CD14-positive monocyte (primary cell): ENCODE measurements at regions of chr4 and their contacts with region 1.

Region 1: DNA sequence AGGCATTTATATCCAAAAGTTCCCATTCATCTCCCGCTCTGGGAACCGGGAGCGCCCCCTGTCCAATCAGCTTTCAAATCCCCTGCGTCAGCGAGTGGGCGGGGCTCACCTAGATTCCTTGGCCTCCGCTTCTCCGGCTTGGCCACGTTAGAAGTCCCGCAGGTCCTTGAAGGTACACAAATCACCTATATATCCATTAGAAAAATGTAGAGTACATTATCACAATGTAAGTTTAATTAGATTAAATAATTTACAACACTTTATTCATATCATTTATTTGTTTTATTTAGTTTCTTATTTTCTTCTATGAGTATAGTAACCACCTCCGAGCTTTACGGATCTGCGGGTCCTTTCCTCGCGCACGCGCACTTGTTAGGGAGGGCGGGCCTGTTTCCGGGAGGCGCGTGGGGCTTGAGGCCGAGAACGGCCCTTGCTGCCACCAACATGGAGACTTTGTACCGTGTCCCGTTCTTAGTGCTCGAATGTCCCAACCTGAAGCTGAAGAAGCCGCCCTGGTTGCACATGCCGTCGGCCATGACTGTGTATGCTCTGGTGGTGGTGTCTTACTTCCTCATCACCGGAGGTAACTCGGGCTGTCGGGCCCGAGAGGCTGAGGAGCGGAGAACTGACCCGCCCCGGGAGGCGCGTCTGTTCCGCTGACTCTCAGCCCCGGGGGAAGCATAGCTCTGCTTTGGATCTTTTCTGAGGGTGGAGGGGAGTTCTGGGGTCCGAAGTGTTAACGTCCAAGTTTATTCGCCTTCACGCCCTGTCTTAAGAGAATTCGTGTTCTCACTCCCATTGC is at the start of gene OSTC:
- DNase-seq: peak; percentile 91 to 94 (median 94)
- H3K4me3 ChIP-seq: peak within 1 kb of the TSS; percentile 57 to 97 (median 84)
- H3K4me3 Mint-ChIP-seq: peak within 1 kb of the TSS; percentile 96 to 98
- H3K27ac ChIP-seq: peak within 1 kb of the TSS; percentile 84 to 94
- H3K27ac Mint-ChIP-seq: peak within 1 kb of the TSS; percentile 93 to 98 (median 98)
- H3K4me1 ChIP-seq: peaks cover 16 to 18% of the 10 kb centered on the region in 2 donors
- H3K4me1 Mint-ChIP-seq: peaks cover 26% of the 10 kb centered on the region
- H3K27me3 ChIP-seq: no peaks in the 10 kb centered on the region
- H3K27me3 Mint-ChIP-seq: no peaks in the 10 kb centered on the region
- CTCF ChIP-seq: no peak
- polyA plus RNA-seq, gene OSTC: 68.5 to 156 (median 149) TPM

Region 2: GRCh38 chr4:108135549-108136209 is 514.7 kb before region 1 on chr4:
- intact Hi-C with region 1: no loop called
- DNase-seq: no peak
- H3K4me3 ChIP-seq: no peak overlapping the region
- H3K4me3 Mint-ChIP-seq: no peak overlapping the region
- H3K27ac ChIP-seq: no peak overlapping the region
- H3K27ac Mint-ChIP-seq: no peak overlapping the region
- H3K4me1 ChIP-seq: no peaks in the 10 kb centered on the region
- H3K4me1 Mint-ChIP-seq: no peaks in the 10 kb centered on the region
- H3K27me3 ChIP-seq: no peaks in the 10 kb centered on the region
- H3K27me3 Mint-ChIP-seq: peaks cover 0 to 3% (median 0%) of the 10 kb centered on the region in 3 donors
- CTCF ChIP-seq: no peak

Region 3: DNA sequence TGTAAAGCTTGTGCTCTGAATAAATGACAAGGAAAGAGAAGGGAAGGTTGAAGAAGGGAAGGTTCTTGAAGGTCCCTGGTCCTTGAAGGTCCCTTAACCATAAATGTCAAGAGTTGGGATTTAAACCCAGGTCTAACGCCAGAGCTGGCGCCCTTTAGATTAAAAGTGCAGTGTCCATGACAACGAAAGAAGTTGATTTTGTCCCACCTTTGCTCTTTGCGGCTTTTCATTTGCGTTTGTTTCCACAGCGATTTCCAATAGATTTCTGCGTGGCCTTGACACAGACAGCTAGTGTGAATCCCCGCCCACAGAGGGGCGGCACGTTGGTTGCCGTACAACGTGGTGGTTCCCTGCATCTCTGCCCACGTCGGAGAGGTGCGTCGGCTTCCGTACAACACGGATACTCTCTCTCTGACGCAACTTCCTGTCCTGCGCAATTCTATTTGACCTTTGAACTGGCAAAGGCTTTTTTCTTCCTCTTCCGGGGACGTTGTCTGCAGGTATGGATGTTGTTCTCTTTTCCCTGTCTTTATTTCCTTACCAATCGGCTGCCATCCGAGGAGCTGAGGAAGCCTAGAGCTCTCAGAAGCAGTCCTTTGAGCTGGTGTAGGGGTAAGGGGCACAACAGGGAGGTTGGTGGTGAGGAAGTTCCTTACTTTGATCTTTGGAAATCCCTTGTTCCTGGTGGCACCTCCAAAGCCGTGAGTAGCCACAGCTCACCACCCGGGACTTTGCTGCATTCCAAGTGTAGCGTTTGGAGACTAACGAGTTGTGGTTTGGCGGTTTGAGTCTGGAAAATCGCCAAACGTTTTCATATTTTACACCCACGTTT is 30.1 kb before region 1 on chr4 and contains the start of gene RPL34:
- intact Hi-C with region 1: loop called (anchors 2 kb)
- DNase-seq: peak; percentile 98 to 99 (median 98)
- H3K4me3 ChIP-seq: peak within 1 kb of the TSS; percentile 90 to 100 (median 96)
- H3K4me3 Mint-ChIP-seq: peak within 1 kb of the TSS; percentile 88 to 90
- H3K27ac ChIP-seq: peak within 1 kb of the TSS; percentile 92 to 93
- H3K27ac Mint-ChIP-seq: peak within 1 kb of the TSS; percentile 90 to 95 (median 93)
- H3K4me1 ChIP-seq: peaks cover 16 to 18% of the 10 kb centered on the region in 2 donors
- H3K4me1 Mint-ChIP-seq: peaks cover 23% of the 10 kb centered on the region
- H3K27me3 ChIP-seq: no peaks in the 10 kb centered on the region
- H3K27me3 Mint-ChIP-seq: no peaks in the 10 kb centered on the region
- CTCF ChIP-seq: no peak
- polyA plus RNA-seq, gene RPL34: 1,490 to 2,624 (median 1,519) TPM